ENCODE measurements at regions of chr3 and their contacts with region 1.

Region 1: GRCh38 chr3:195442573-195443390 is at the start of gene ACAP2:
- DNase-seq: peak; percentile 98
- ATAC-seq: peak; percentile 94
- H3K4me3 Mint-ChIP-seq: peak within 1 kb of the TSS; percentile 96
- H3K27ac Mint-ChIP-seq: peak within 1 kb of the TSS; percentile 91
- H3K4me1 Mint-ChIP-seq: peaks cover 47% of the 10 kb centered on the region
- H3K27me3 Mint-ChIP-seq: no peaks in the 10 kb centered on the region
- CTCF ChIP-seq: no peak
- total RNA-seq, gene ACAP2: 54.6 to 55.7 TPM

Region 2: GRCh38 chr3:195236046-195236798 is 206.6 kb before region 1 on chr3:
- CTCF ChIA-PET with region 1: no interaction called
- POLR2A ChIA-PET with region 1: no interaction called
- intact Hi-C with region 1: no loop called
- DNase-seq: no peak
- ATAC-seq: no peak
- H3K4me3 Mint-ChIP-seq: no peak overlapping the region
- H3K27ac Mint-ChIP-seq: no peak overlapping the region
- H3K4me1 Mint-ChIP-seq: peaks cover 10% of the 10 kb centered on the region
- H3K27me3 Mint-ChIP-seq: no peaks in the 10 kb centered on the region
- CTCF ChIP-seq: no peak

Region 3: DNA sequence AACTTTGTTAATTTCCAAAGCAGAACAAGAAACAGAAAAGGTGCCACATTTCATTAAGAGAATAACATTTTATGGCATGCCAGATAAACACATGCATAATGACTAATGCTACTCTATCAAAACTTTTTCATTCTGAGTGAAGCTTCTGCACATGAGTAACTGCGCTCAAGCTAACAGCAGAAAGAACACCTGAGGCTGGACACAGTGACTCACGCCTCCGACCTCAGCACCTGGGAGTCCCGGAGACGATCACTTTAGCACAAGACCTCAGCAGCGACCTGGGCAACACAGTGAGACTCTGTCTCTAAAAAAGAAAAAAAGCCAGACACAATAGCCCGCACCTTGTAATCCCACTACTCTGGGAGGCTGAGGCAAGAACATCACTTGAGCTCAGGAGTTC is 70.6 kb before region 1 on chr3:
- CTCF ChIA-PET with region 1: no interaction called
- POLR2A ChIA-PET with region 1: interaction called, 4 read pairs
- intact Hi-C with region 1: loop called (anchors 10 kb)
- DNase-seq: no peak
- ATAC-seq: no peak
- H3K4me3 Mint-ChIP-seq: no peak overlapping the region
- H3K27ac Mint-ChIP-seq: no peak overlapping the region
- H3K4me1 Mint-ChIP-seq: no peaks in the 10 kb centered on the region
- H3K27me3 Mint-ChIP-seq: no peaks in the 10 kb centered on the region
- CTCF ChIP-seq: no peak

Measured in activated CD8-positive, alpha-beta T cell treated with anti-CD3 and anti-CD28 coated beads for 36 hours (primary cell).